ENCODE measurements at regions of chr14 and their contacts with region 1.

Region 1: DNA sequence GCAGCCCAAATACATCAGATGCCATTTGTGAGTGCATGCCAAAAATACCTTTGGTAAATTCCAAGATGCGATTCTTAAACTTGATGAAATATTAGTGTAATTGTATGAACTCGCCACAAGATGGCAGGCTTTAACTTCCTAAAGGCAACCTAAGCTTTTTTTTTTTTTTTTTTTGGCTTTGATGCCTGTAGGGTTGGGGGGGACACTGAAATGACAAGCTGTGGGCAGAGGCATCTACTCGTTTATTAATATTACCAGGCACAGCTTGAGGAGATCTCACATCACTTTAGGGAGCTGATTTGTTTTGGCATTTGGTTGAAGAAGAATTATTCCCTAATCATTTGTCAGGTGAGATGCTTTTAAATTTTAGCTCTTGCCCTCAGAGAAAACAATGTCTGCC is 126.7 kb upstream of the CCDC196 start:
- DNase-seq: peak; percentile 25
- H3K4me3 ChIP-seq: no peak overlapping the region
- H3K27ac ChIP-seq: no peak overlapping the region
- H3K4me1 ChIP-seq: no peaks in the 10 kb centered on the region
- H3K27me3 ChIP-seq: peaks cover 2% of the 10 kb centered on the region
- CTCF ChIP-seq: peak; percentile 54 to 60

Region 2: DNA sequence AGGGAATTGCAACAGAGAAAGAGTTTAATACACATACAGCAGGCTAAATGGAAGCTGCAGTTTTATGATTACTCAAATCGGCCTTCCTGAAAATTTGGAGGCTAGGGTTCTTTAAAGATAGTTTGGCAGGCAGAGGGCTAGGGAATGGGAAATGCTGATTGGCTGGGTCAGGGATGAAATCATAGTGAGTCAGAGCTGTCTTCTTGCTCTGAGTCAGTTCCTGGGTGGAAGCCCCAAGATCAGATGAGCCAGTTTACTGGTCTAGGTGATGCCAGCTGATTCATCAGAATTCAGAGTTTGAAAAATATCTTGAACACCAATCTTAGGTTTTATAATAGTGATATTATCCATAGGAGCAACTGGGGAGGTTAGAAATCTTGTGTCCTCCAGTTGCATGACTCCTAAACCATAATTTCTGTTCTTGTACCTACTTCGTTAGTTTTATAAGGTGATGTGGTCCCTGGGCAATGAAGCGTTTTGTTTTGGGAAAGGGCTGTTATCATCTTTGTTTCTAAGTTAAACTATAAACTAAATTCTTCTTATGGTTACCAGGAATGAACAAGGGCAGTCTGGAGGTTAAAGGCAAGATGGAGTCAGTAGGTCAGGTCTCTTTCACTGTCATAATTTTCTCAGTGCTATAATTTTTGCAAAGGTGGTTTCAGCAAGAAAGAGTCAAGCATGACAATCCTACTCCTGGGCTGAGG is 131.1 kb before region 1 on chr14:
- CTCF ChIA-PET with region 1: interaction called, 13 read pairs
- dilution Hi-C with region 1: no loop called
- in situ Hi-C with region 1: no loop called
- intact Hi-C with region 1: no loop called
- DNase-seq: peak; percentile 86
- H3K4me3 ChIP-seq: no peak overlapping the region
- H3K27ac ChIP-seq: no peak overlapping the region
- H3K4me1 ChIP-seq: peaks cover 11% of the 10 kb centered on the region
- H3K27me3 ChIP-seq: no peaks in the 10 kb centered on the region
- CTCF ChIP-seq: no peak

Region 3: DNA sequence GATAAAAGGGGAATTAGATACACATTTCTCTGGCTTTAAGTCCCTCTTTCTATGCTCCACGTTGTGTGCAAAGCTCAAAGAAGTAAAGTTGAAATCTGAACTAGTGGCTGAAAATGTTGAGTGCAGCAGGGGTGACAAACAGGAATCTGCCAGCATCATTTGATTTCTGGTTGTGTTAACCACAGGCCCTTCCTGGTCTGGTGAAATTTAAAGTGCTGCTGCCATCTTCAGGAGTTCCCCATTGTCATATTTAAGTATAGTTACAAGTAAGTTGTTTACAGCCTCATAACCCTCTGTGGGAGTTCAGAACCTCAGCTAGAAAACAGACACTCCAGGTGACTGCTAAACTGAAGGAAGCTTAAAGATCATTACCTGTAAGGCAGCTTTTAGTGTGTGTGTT is 35.8 kb after region 1 on chr14:
- CTCF ChIA-PET with region 1: no interaction called
- dilution Hi-C with region 1: no loop called
- in situ Hi-C with region 1: no loop called
- intact Hi-C with region 1: loop called (anchors 1 kb)
- DNase-seq: peak; percentile 12
- H3K4me3 ChIP-seq: no peak overlapping the region
- H3K27ac ChIP-seq: no peak overlapping the region
- H3K4me1 ChIP-seq: no peaks in the 10 kb centered on the region
- H3K27me3 ChIP-seq: no peaks in the 10 kb centered on the region
- CTCF ChIP-seq: peak in 1 of 2 donors; percentile 28

Region 4: DNA sequence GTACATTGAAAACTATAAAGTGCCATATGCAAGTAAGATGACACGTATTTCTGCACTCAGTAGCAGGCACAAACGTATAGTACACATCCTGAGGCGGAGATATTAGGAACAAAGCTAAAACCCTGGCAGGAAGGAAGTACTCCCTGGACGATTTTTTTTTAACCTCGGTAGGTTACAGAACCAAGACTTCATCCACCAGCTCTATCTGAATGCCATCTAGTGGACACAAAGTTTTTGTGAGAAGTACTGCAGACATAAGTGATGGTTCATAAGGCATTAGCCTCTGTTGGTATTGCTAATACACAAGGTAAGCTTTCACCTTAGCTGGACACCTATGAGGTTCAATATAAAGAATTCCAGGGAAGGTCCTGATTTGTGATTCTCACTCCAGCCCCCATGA is 43.7 kb after region 1 on chr14:
- CTCF ChIA-PET with region 1: interaction called, 52 read pairs
- dilution Hi-C with region 1: no loop called
- in situ Hi-C with region 1: no loop called
- intact Hi-C with region 1: loop called (anchors 1 kb)
- DNase-seq: peak; percentile 50
- H3K4me3 ChIP-seq: no peak overlapping the region
- H3K27ac ChIP-seq: no peak overlapping the region
- H3K4me1 ChIP-seq: no peaks in the 10 kb centered on the region
- H3K27me3 ChIP-seq: no peaks in the 10 kb centered on the region
- CTCF ChIP-seq: peak; percentile 48 to 72

Region 5: DNA sequence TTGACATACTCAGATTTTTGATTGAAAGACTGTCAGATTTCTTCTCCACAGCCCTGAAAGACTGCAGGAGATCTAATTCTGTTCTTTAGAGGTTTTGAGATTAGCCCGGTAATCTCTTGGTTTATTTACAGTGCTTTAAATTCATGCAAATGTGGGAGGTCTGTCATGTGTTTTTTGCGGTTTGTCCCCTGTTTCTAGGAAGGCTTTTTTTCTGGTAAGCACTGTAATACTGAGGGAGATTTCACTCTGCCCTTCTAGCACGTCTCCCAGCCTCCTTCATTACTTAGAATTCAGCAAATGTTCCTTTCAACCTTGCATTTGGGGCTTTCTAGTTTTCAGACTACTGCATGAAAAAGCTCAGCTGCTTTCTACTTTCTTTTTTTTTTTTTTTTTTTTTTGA is 179.5 kb after region 1 on chr14:
- CTCF ChIA-PET with region 1: no interaction called
- dilution Hi-C with region 1: no loop called
- in situ Hi-C with region 1: no loop called
- intact Hi-C with region 1: no loop called
- DNase-seq: no peak
- H3K4me3 ChIP-seq: no peak overlapping the region
- H3K27ac ChIP-seq: no peak overlapping the region
- H3K4me1 ChIP-seq: no peaks in the 10 kb centered on the region
- H3K27me3 ChIP-seq: no peaks in the 10 kb centered on the region
- CTCF ChIP-seq: no peak

Region 6: DNA sequence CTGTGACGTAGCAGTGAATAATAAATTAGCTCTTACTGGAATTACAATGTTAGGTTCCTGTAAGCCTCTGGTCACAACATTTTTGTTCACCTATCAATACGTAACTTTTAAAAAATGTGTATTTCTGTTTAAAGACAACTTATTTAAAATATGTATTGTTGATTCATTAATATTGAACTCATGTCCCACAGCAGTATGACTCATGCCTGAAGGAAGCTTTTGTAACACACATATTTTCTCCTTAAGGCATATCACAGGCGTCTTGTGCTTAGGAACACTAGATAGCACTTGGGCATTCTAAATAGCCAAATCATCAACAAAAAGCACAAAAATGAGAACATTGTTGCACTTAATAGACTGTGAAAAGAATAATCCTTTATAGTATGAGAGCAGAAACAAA is 240.9 kb after region 1 on chr14:
- CTCF ChIA-PET with region 1: no interaction called
- dilution Hi-C with region 1: no loop called
- in situ Hi-C with region 1: no loop called
- intact Hi-C with region 1: no loop called
- DNase-seq: peak; percentile 47
- H3K4me3 ChIP-seq: no peak overlapping the region
- H3K27ac ChIP-seq: peak overlapping the region; percentile 33
- H3K4me1 ChIP-seq: peaks cover 8% of the 10 kb centered on the region
- H3K27me3 ChIP-seq: no peaks in the 10 kb centered on the region
- CTCF ChIP-seq: no peak

Region 7: GRCh38 chr14:66746316-66747006 is 387.0 kb after region 1 on chr14:
- CTCF ChIA-PET with region 1: interaction called, 11 read pairs
- dilution Hi-C with region 1: no loop called
- in situ Hi-C with region 1: no loop called
- intact Hi-C with region 1: no loop called
- DNase-seq: peak; percentile 28
- H3K4me3 ChIP-seq: no peak overlapping the region
- H3K27ac ChIP-seq: no peak overlapping the region
- H3K4me1 ChIP-seq: no peaks in the 10 kb centered on the region
- H3K27me3 ChIP-seq: no peaks in the 10 kb centered on the region
- CTCF ChIP-seq: peak; percentile 65 to 75